ENCODE measurements at regions of chr22 and their contacts with region 1.

Region 1: DNA sequence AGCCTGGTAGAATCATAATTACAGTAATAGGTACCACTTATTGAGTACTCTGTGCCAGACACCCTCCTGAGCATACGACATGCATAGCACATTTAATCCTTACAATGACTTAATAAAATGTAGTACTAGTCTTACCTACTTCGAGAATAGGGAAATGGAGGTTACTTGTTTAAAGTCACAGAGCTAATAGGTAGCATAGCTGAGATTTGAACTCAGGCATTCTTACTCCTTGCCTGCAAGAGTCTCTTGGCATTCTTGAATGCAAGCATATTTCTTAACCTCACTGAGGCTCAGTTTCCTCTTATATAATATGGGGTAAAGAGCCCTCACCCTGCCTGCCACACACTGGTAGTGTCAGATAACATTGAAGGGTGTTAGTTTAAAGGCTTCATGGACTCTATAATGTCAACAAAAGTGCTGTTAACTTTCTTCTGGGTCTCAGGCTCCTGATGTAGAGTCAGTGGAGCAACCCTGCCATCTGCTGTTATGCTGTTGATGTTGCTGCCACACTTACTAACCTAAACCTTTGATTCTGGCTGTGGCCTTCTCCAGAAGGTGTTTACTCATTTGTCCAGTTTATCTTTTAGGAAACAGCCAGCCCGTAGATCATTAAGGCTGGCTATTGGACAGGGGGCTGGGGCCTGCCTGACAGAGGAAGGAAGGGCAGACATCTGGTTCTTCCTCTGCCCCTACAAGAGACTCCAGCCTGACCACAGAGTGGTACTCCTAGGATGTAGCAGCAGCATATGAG is 18.9 kb downstream of the LIMK2 start:
- DNase-seq: peak; percentile 73
- H3K4me3 Mint-ChIP-seq: no peak overlapping the region
- H3K27ac Mint-ChIP-seq: peak overlapping the region; percentile 91
- H3K4me1 Mint-ChIP-seq: peaks cover 41% of the 10 kb centered on the region
- H3K27me3 Mint-ChIP-seq: no peaks in the 10 kb centered on the region

Region 2: DNA sequence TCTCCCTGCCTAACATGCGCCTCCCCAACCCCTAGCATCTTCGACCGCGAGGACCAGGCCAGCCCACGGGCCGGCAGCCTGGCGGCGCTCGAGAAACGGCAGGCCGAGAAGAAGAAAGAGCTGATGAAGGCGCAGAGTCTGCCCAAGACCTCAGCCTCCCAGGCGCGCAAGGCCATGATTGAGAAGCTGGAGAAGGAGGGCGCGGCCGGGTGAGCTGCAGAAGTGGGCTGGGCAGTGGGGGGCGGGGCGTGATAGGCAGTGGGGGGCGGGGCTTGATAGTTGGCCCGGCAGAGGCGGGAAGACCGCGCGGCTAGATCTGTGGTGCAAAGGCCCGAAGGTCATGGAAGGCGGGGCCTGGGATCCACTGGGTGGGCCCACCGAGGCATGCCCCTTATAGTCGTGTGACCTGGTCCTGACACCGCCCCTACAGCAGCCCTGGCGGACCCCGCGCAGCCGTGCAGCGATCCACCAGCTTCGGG is 132.4 kb before region 1 on chr22:
- CTCF ChIA-PET with region 1: no interaction called
- DNase-seq: no peak
- H3K4me3 Mint-ChIP-seq: no peak overlapping the region
- H3K27ac Mint-ChIP-seq: no peak overlapping the region
- H3K4me1 Mint-ChIP-seq: no peaks in the 10 kb centered on the region
- H3K27me3 Mint-ChIP-seq: no peaks in the 10 kb centered on the region

Region 3: GRCh38 chr22:31218565-31219262 is 12.3 kb before region 1 on chr22:
- CTCF ChIA-PET with region 1: interaction called, 25 read pairs
- DNase-seq: no peak
- H3K4me3 Mint-ChIP-seq: no peak overlapping the region
- H3K27ac Mint-ChIP-seq: peak overlapping the region; percentile 82
- H3K4me1 Mint-ChIP-seq: peaks cover 65% of the 10 kb centered on the region
- H3K27me3 Mint-ChIP-seq: no peaks in the 10 kb centered on the region

Region 4: GRCh38 chr22:31262312-31263080 is 31.4 kb after region 1 on chr22:
- CTCF ChIA-PET with region 1: no interaction called
- DNase-seq: no peak
- H3K4me3 Mint-ChIP-seq: no peak overlapping the region
- H3K27ac Mint-ChIP-seq: no peak overlapping the region
- H3K4me1 Mint-ChIP-seq: no peaks in the 10 kb centered on the region
- H3K27me3 Mint-ChIP-seq: no peaks in the 10 kb centered on the region

Measured in activated naive CD4-positive, alpha-beta T cell treated with anti-CD3 and anti-CD28 coated beads, Interleukin-2, amount 10 ng/mL, durations not matched to agents 7 days and 5 days (primary cell).